ENCODE measurements at regions of chr9 and their contacts with region 1.

Region 1: GRCh38 chr9:77433675-77434445 is 214.3 kb downstream of the GNA14 start:
- DNase-seq: peak; percentile 58
- H3K4me3 ChIP-seq: no peak overlapping the region
- H3K27ac ChIP-seq: no peak overlapping the region
- H3K4me1 ChIP-seq: no peaks in the 10 kb centered on the region
- H3K27me3 ChIP-seq: no peaks in the 10 kb centered on the region
- CTCF ChIP-seq: peak; percentile 68 to 93 (median 80)
- POLR2A ChIP-seq: no peak

Region 2: GRCh38 chr9:77562019-77562748 is 128.3 kb after region 1 on chr9:
- intact Hi-C with region 1: no loop called
- DNase-seq: no peak
- H3K4me3 ChIP-seq: no peak overlapping the region
- H3K27ac ChIP-seq: no peak overlapping the region
- H3K4me1 ChIP-seq: no peaks in the 10 kb centered on the region
- H3K27me3 ChIP-seq: no peaks in the 10 kb centered on the region
- CTCF ChIP-seq: no peak
- POLR2A ChIP-seq: no peak

Region 3: GRCh38 chr9:77751341-77752091 is 317.7 kb after region 1 on chr9:
- intact Hi-C with region 1: loop called (anchors 2 kb)
- DNase-seq: peak; percentile 64
- H3K4me3 ChIP-seq: no peak overlapping the region
- H3K27ac ChIP-seq: peak overlapping the region; percentile 6 to 14
- H3K4me1 ChIP-seq: no peaks in the 10 kb centered on the region
- H3K27me3 ChIP-seq: no peaks in the 10 kb centered on the region
- CTCF ChIP-seq: peak in 3 of 4 experiments; percentile 40 to 68 (median 59)
- POLR2A ChIP-seq: no peak

Region 4: DNA sequence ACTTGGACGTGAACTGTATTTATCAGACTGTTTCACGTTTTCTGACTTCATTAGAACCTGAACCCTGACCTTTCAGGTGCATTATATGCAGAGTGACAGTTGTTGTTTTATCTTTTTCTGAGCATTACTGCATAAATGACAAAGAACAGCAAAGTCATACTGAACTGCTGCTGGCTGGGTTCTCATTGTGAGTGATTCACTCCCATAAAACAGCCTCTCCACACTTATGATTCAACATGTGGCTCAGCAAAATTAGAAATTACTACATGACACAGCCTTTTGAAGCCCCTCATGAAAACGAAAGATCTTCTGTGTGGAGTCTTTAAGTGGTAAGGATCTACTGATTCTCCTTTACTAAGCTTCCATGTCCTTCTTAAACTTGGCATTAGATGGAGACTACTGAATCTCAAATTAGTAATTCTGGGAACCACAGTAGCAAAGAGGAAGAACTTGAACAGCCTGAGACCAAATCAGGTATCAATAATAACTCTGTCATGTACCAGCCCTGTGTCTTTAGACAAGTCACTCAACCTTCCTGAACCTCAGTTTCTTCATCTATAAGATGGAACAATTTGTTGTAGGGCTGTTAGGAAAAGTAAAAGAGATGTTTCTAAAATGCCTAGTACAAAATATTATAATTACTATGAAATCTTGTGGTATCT is 386.6 kb after region 1 on chr9:
- intact Hi-C with region 1: loop called (anchors 10 kb)
- DNase-seq: no peak
- H3K4me3 ChIP-seq: no peak overlapping the region
- H3K27ac ChIP-seq: no peak overlapping the region
- H3K4me1 ChIP-seq: no peaks in the 10 kb centered on the region
- H3K27me3 ChIP-seq: no peaks in the 10 kb centered on the region
- CTCF ChIP-seq: no peak
- POLR2A ChIP-seq: no peak

Region 5: GRCh38 chr9:78121488-78121887 is 687.6 kb after region 1 on chr9:
- intact Hi-C with region 1: loop called (anchors 5 kb)
- DNase-seq: peak; percentile 27
- H3K4me3 ChIP-seq: no peak overlapping the region
- H3K27ac ChIP-seq: no peak overlapping the region
- H3K4me1 ChIP-seq: no peaks in the 10 kb centered on the region
- H3K27me3 ChIP-seq: no peaks in the 10 kb centered on the region
- CTCF ChIP-seq: peak in 3 of 4 experiments; percentile 34 to 52 (median 51)
- POLR2A ChIP-seq: no peak

Measured in prostate gland (tissue), 2 donors.